ENCODE measurements at regions of chr1 and their contacts with region 1.

Region 1: DNA sequence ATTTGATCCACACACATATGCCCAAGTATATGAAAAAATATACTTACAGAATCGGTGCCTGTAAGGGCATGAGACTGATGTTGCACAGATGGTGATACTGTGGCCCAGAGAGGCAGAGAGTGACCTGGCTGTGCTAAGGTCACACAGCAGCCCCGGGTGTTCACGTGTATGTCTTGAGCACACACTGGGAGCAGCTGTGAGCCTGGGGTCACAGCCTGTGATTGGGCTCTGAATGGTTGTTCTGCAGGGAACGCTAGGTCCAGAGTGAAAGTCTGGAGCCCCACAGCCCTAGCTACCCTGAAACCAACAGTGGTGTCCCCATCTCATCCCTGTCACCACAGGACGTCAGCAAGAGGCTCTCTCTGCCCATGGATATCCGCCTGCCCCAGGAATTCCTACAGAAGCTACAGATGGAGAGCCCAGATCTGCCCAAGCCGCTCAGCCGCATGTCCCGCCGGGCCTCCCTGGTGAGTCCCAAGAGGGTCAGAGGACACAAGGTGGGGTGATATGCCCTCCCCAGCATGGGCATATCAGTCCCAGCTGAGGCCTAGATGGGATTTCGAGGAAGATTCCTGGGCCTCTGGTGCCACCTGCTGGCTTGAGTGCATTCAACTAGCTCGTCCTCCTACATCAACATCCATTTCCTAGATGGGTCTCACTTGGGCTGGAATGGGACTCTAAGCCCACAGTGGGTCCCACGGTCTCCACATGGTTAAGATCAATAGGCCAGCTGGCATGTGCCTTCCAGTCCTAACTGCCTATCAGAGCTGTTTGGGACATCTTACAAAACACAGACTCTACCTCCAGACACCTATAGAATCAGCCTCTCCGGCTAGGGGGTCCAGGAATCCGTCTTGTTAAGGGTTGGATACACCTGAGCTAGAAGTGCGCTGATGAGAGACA is 19.7 kb downstream of the CDK18 start:
- DNase-seq: peak; percentile 71 to 87
- ATAC-seq: peak; percentile 65 to 81
- H3K4me3 ChIP-seq: no peak overlapping the region
- H3K27ac ChIP-seq: no peak overlapping the region
- H3K4me1 ChIP-seq: 0 out of 3 replicates have a peak, but pooled peaks cover 6% of the 10 kb centered on the region
- CTCF ChIP-seq: peak; percentile 91
- EP300 ChIP-seq: no peak
- POLR2A ChIP-seq: no peak
- RAD21 ChIP-seq: peak; percentile 95

Region 2: GRCh38 chr1:205255941-205256780 is 268.0 kb before region 1 on chr1:
- CTCF ChIA-PET with region 1: interaction called, 10 read pairs
- POLR2A ChIA-PET with region 1: no interaction called
- DNase-seq: peak; percentile 82
- ATAC-seq: peak; percentile 91 to 97
- H3K4me3 ChIP-seq: no peak overlapping the region
- H3K27ac ChIP-seq: peak overlapping the region in 1 of 2 experiments; percentile 51; a peak in 3 of 6 replicates
- H3K4me1 ChIP-seq: peaks cover 16% of the 10 kb centered on the region
- CTCF ChIP-seq: peak; percentile 95
- EP300 ChIP-seq: no peak
- POLR2A ChIP-seq: no peak
- RAD21 ChIP-seq: peak; percentile 97 to 100

Region 3: DNA sequence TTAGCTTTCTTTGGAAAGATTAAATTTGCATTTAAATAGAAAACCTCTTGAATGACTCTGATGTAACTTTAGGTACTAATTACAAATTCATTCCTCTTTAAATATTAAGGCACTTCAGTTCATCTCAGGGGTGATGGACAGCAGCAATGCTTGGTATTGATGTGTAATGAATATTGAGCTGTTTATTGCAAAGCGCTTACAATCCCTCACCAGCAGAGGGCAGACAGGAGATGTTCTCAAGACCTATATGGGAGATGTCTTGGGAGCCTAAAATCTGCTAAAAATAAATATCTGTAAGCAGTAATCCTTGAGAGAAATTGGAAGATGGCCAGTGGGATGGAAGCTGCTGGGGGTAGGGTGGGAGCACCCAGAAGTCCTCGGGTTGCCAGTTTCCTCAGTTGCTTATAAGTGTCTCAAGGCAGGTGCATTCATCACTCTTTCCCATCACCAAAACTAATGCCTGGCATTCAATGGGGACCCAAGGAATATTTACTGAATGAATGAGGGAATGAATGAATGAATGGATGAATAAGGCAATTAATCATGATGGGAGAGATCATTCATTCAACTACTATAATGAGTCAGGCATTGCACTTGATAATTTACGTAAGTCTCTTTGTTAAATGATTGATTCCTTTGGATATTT is 169.8 kb before region 1 on chr1:
- CTCF ChIA-PET with region 1: interaction called, 117 read pairs
- POLR2A ChIA-PET with region 1: no interaction called
- DNase-seq: peak; percentile 35 to 76
- ATAC-seq: peak; percentile 65 to 83; a peak in 4 of 6 replicates
- H3K4me3 ChIP-seq: no peak overlapping the region
- H3K27ac ChIP-seq: no peak overlapping the region; a peak in 1 of 6 replicates
- H3K4me1 ChIP-seq: peaks cover 25% of the 10 kb centered on the region
- CTCF ChIP-seq: peak; percentile 86
- EP300 ChIP-seq: no peak
- POLR2A ChIP-seq: no peak
- RAD21 ChIP-seq: peak; percentile 74 to 79

Region 4: GRCh38 chr1:205422993-205423625 is 101.0 kb before region 1 on chr1:
- CTCF ChIA-PET with region 1: interaction called, 40 read pairs
- POLR2A ChIA-PET with region 1: no interaction called
- DNase-seq: no peak
- ATAC-seq: no peak
- H3K4me3 ChIP-seq: no peak overlapping the region
- H3K27ac ChIP-seq: no peak overlapping the region
- H3K4me1 ChIP-seq: no peaks in the 10 kb centered on the region
- CTCF ChIP-seq: 0 out of 3 replicates have a peak, but pooled peaks have one; percentile 9
- EP300 ChIP-seq: no peak
- POLR2A ChIP-seq: no peak
- RAD21 ChIP-seq: no peak

Region 5: GRCh38 chr1:205458777-205459566 is 65.2 kb before region 1 on chr1:
- CTCF ChIA-PET with region 1: interaction called, 12 read pairs
- POLR2A ChIA-PET with region 1: no interaction called
- DNase-seq: peak in 1 of 2 experiments; percentile 43
- ATAC-seq: peak; percentile 60 to 68; a peak in 5 of 6 replicates
- H3K4me3 ChIP-seq: no peak overlapping the region
- H3K27ac ChIP-seq: no peak overlapping the region
- H3K4me1 ChIP-seq: peaks cover 15% of the 10 kb centered on the region
- CTCF ChIP-seq: no peak
- EP300 ChIP-seq: no peak
- POLR2A ChIP-seq: no peak
- RAD21 ChIP-seq: no peak

Region 6: GRCh38 chr1:205543411-205544301 is 19.5 kb after region 1 on chr1:
- CTCF ChIA-PET with region 1: interaction called, 52 read pairs
- POLR2A ChIA-PET with region 1: no interaction called
- DNase-seq: peak in 1 of 2 experiments; percentile 63
- ATAC-seq: peak; percentile 62 to 78
- H3K4me3 ChIP-seq: peak overlapping the region; percentile 29; the same call in 1 of the 3 replicates
- H3K27ac ChIP-seq: peak overlapping the region; percentile 12 to 65; a peak in 3 of 6 replicates
- H3K4me1 ChIP-seq: peaks cover 9% of the 10 kb centered on the region; the same call in 2 of the 3 replicates
- CTCF ChIP-seq: no peak
- EP300 ChIP-seq: no peak
- POLR2A ChIP-seq: no peak
- RAD21 ChIP-seq: no peak

Region 7: DNA sequence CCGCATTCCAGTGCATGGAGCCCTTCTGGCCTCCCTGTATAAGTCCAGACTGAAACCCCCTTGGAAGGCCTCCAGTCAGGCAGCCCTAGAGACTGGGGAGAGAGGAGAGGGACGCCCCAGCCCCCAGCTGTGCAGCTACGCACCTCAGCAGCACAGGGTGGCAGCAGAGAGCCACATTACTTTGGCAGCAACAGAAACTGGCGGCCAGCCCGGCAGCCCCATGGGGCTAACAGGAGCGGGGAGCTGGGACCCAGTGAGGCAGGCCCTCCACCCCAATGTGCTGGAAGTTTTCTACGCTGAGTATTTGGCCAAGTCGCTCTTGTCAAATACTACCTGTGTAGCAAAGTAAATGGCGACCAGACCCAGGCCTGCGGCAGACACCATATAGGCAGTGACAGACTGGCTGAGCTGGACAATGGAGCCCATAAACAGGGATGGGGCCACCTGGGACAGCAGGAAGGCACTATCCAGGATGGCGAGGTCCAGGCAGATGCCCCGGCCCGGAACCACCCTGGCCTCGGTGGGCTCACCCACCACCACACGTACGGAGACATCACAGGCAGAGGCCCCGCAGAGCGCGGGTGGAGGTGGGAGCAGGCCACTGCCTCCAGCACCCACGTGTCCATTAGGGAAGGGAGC is 134.9 kb after region 1 on chr1:
- CTCF ChIA-PET with region 1: interaction called, 154 read pairs
- POLR2A ChIA-PET with region 1: no interaction called
- DNase-seq: peak; percentile 56 to 87
- ATAC-seq: peak; percentile 85 to 94
- H3K4me3 ChIP-seq: no peak overlapping the region
- H3K27ac ChIP-seq: no peak overlapping the region
- H3K4me1 ChIP-seq: no peaks in the 10 kb centered on the region
- CTCF ChIP-seq: peak; percentile 79
- EP300 ChIP-seq: no peak
- POLR2A ChIP-seq: no peak
- RAD21 ChIP-seq: peak; percentile 83 to 88

Region 8: GRCh38 chr1:205675247-205675646 is 151.1 kb after region 1 on chr1:
- CTCF ChIA-PET with region 1: no interaction called
- POLR2A ChIA-PET with region 1: no interaction called
- DNase-seq: no peak
- ATAC-seq: no peak
- H3K4me3 ChIP-seq: no peak overlapping the region
- H3K27ac ChIP-seq: no peak overlapping the region
- H3K4me1 ChIP-seq: peaks cover 8% of the 10 kb centered on the region
- CTCF ChIP-seq: no peak
- EP300 ChIP-seq: no peak
- POLR2A ChIP-seq: no peak
- RAD21 ChIP-seq: no peak